ENCODE measurements at regions of chr17 and their contacts with region 1.

Region 1: DNA sequence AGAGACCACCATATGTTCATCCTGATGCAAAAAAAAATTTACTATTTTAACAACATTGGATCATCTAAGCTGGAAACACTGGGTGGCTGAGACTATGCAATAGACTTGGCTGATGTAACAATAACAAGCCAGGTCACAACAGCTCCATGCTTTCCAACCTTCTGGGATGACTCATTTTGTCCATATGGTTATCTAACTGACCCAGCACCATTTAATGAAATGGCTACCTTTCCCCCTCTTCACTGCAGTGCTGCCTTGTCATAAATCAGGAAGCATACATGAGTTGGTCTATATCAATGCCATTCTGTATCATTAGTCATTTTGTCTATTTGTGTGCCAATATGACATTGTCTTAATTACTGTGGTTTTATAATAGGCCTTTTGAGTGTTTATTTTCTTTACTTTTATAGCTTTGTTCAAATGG is 217.6 kb upstream of the KCNJ16 start:
- DNase-seq: peak; percentile 97
- ATAC-seq: peak; percentile 98
- H3K4me3 ChIP-seq: no peak overlapping the region
- H3K27ac ChIP-seq: peak overlapping the region; percentile 11
- H3K4me1 ChIP-seq: peaks cover 17% of the 10 kb centered on the region
- H3K27me3 ChIP-seq: no peaks in the 10 kb centered on the region
- CTCF ChIP-seq: no peak

Region 2: DNA sequence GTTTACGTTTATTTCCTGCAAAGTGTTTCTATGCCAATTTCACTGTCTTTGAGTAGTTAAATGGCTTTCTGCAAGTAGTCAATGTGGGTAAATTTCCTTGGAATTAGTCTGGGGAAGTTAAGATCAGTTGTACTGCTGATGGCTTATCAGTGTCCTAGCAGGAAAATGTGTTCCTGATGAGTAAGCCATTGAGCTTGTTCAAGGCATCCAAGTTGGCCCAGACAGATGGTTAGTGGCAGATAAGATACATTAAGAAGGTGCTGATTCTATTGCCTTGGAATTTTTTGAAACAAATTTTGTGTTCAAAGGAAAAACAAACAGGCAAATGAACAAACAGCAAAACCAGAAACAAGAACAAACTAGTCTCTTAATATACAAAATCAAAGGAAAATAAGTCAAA is 184.5 kb before region 1 on chr17:
- CTCF ChIA-PET with region 1: no interaction called
- POLR2A ChIA-PET with region 1: no interaction called
- intact Hi-C with region 1: loop called (anchors 5 kb)
- DNase-seq: peak; percentile 46
- ATAC-seq: peak; percentile 31
- H3K4me3 ChIP-seq: no peak overlapping the region
- H3K27ac ChIP-seq: no peak overlapping the region
- H3K4me1 ChIP-seq: peaks cover 7% of the 10 kb centered on the region
- H3K27me3 ChIP-seq: no peaks in the 10 kb centered on the region
- CTCF ChIP-seq: no peak

Region 3: DNA sequence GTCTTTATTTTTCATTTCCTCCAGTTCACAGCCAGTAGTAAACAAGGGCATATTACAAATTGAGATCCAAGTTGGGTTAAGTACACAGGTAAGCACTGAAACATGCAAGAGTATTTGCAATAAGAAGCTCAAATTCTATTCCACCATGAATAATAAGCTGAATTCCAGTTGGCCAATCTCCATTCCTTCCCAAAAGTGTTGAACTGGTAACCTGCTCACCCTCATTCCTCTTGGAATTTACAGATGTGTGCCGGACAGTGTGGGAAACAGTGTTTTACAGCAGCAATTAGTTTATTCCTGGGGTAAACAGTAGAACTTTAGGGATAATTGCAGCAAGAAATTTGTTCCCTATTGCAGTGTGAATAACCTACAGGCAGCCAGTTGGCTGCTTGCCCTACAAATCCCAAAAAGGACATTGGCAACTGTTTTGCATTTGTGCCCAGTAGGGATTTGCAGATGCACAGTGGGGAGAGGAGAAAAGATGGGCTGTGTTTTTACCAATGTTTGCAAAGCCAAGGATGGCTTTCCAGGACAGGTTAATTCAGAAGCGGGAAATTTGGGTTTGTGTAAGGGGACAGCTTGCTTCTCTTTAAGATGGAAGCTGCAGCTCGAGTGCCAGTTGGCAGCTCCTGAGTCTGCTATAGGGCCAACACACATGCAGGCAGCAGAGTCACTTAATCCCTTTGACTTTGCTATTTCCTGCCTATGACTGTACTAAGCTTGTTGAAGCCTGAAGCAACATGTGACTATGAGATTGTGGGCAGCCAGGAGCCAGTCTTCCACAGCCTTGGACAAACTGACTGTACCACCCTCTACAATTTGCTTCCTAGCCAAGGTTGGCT is 124.0 kb before region 1 on chr17:
- CTCF ChIA-PET with region 1: no interaction called
- POLR2A ChIA-PET with region 1: no interaction called
- intact Hi-C with region 1: no loop called
- DNase-seq: peak; percentile 78
- ATAC-seq: peak; percentile 98
- H3K4me3 ChIP-seq: no peak overlapping the region
- H3K27ac ChIP-seq: no peak overlapping the region
- H3K4me1 ChIP-seq: peaks cover 24% of the 10 kb centered on the region
- H3K27me3 ChIP-seq: no peaks in the 10 kb centered on the region
- CTCF ChIP-seq: no peak

Region 4: DNA sequence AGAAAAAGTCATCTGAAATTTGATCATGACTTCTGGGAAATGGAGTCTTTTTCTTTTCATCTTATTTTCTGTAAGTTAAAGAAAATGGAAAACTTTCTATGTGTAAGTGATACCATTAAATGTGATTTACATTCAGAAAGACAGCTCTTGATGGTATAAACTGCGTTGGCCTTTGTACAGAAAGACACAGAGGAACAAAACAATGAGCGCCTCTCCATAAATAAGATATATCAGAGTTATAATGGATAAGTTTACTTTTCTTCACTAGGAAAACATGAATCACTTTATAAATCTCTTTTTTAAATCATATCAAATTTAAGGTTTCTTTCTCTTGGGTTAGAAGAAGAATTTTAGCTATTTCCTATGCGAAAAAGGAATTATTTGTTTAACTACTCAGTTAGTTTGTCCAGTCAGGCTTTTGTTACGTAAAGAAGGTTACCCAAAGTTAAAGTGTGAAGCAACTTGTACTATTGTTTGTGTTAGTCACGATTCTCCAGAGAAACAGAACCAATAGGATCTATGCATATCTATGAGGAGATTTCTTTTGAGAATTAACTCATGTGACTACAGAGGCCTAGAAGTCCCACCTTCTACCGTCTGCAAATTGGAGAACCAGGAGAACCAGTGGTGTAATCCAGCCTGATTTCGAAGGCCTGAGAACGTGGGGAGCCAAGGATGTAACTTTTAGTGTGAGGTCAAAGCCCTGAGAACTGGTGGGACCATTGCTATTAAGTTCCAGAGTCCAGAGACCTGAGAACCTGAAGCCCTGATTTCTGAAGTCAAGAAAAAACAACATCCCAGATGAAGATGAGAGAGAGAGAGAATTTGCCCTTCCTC is 77.8 kb before region 1 on chr17:
- CTCF ChIA-PET with region 1: no interaction called
- POLR2A ChIA-PET with region 1: no interaction called
- intact Hi-C with region 1: loop called (anchors 1 kb)
- DNase-seq: peak; percentile 91
- ATAC-seq: peak; percentile 79
- H3K4me3 ChIP-seq: no peak overlapping the region
- H3K27ac ChIP-seq: peak overlapping the region; percentile 82
- H3K4me1 ChIP-seq: peaks cover 37% of the 10 kb centered on the region
- H3K27me3 ChIP-seq: no peaks in the 10 kb centered on the region
- CTCF ChIP-seq: no peak

Region 5: GRCh38 chr17:69819316-69820087 is 37.9 kb before region 1 on chr17:
- CTCF ChIA-PET with region 1: no interaction called
- POLR2A ChIA-PET with region 1: no interaction called
- intact Hi-C with region 1: no loop called
- DNase-seq: no peak
- ATAC-seq: no peak
- H3K4me3 ChIP-seq: no peak overlapping the region
- H3K27ac ChIP-seq: no peak overlapping the region
- H3K4me1 ChIP-seq: no peaks in the 10 kb centered on the region
- H3K27me3 ChIP-seq: no peaks in the 10 kb centered on the region
- CTCF ChIP-seq: no peak

Region 6: DNA sequence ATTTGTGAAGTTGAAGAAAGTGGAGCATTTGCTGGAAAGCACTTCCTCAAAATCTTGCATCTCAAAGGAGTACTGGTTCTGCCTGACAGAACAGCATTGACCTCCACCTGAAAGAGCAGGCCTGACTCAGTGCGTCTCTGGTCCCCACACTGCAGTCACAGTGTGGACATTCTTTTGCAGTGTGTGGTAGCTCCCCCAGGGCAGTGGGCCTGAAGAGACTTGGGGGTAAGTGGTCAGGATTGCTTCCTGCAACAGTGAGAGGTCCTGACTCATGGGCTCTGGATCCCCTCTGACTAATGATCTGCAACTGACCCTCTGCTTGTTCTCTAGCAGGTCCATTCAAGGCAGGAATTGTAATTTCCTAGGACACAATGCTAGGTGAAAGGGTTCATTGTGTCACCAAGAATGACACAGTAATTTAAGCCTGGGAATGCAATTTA is 12.7 kb after region 1 on chr17:
- CTCF ChIA-PET with region 1: no interaction called
- POLR2A ChIA-PET with region 1: interaction called, 3 read pairs
- intact Hi-C with region 1: loop called (anchors 1 kb)
- DNase-seq: peak; percentile 95
- ATAC-seq: peak; percentile 69
- H3K4me3 ChIP-seq: no peak overlapping the region
- H3K27ac ChIP-seq: peak overlapping the region; percentile 66
- H3K4me1 ChIP-seq: peaks cover 40% of the 10 kb centered on the region
- H3K27me3 ChIP-seq: no peaks in the 10 kb centered on the region
- CTCF ChIP-seq: no peak

Region 7: GRCh38 chr17:70137451-70138230 is 280.2 kb after region 1 on chr17:
- CTCF ChIA-PET with region 1: no interaction called
- POLR2A ChIA-PET with region 1: no interaction called
- intact Hi-C with region 1: loop called (anchors 2 kb)
- DNase-seq: peak; percentile 89
- ATAC-seq: peak; percentile 96
- H3K4me3 ChIP-seq: peak overlapping the region; percentile 67
- H3K27ac ChIP-seq: peak overlapping the region; percentile 22; the same call in 1 of the 2 replicates
- H3K4me1 ChIP-seq: peaks cover 16% of the 10 kb centered on the region
- H3K27me3 ChIP-seq: no peaks in the 10 kb centered on the region
- CTCF ChIP-seq: no peak

Region 8: DNA sequence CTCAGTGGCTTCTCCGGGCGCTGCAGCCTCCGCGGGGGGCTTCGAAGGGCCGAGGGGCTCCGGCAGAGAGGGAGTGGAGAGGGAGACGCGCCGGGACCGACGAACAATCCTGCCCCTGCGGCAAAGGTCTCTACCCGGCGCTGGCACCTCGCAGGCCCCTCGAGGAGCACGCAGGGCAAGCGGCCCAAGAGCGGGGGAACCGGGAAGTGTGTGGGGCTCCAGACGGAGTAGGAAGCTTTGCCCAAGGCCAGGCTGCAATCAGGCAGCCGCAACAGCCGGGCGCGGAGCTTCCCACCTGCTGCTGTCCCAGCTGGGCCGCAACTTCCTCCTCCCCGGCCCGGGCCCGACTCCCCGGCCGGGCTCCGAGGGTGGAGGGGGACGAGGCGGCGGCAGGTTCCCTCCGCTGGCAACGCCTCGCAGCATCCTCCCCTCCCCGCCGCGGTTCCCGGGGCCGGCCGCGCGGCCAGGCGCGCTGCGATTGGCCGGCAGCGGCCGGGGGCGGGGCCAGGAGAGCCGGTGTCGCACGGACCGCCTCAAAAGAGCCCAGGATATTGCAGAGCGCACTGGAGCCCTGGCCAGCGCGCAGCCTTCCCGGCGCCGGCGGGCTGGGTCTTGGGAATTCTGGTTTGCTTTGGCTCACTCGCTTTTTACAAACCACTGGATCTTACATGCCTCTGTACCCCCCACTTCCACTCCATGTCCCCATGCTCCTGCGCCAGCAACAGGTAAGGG is 311.7 kb after region 1 on chr17 and contains the start of gene KCNJ2:
- CTCF ChIA-PET with region 1: no interaction called
- POLR2A ChIA-PET with region 1: no interaction called
- intact Hi-C with region 1: loop called (anchors 1 kb)
- DNase-seq: peak; percentile 94
- ATAC-seq: peak; percentile 91
- H3K4me3 ChIP-seq: peak within 1 kb of the TSS; percentile 72
- H3K27ac ChIP-seq: no peak within 1 kb of the TSS
- H3K4me1 ChIP-seq: peaks cover 11% of the 10 kb centered on the region
- H3K27me3 ChIP-seq: peaks cover 34% of the 10 kb centered on the region
- CTCF ChIP-seq: no peak
- total RNA-seq, gene KCNJ2: 0.36 TPM in 1 of 2 replicates, not detected in the other

Measured in PC-3 (cell line).